ENCODE measurements at regions of chr12 and their contacts with region 1.

Region 1: GRCh38 chr12:27434673-27435565 is 11.6 kb upstream of the SMCO2 start:
- DNase-seq: no peak
- H3K4me3 Mint-ChIP-seq: no peak overlapping the region
- H3K27ac Mint-ChIP-seq: no peak overlapping the region
- H3K4me1 Mint-ChIP-seq: peaks cover 55% of the 10 kb centered on the region
- H3K27me3 Mint-ChIP-seq: peaks cover 2% of the 10 kb centered on the region

Region 2: GRCh38 chr12:26939192-26939832 is 495.6 kb before region 1 on chr12:
- intact Hi-C with region 1: no loop called
- DNase-seq: no peak
- H3K4me3 Mint-ChIP-seq: peak overlapping the region; percentile 94
- H3K27ac Mint-ChIP-seq: peak overlapping the region; percentile 91
- H3K4me1 Mint-ChIP-seq: peaks cover 64% of the 10 kb centered on the region
- H3K27me3 Mint-ChIP-seq: no peaks in the 10 kb centered on the region

Region 3: GRCh38 chr12:27412047-27412446 is 22.9 kb before region 1 on chr12:
- intact Hi-C with region 1: no loop called
- DNase-seq: no peak
- H3K4me3 Mint-ChIP-seq: no peak overlapping the region
- H3K27ac Mint-ChIP-seq: no peak overlapping the region
- H3K4me1 Mint-ChIP-seq: no peaks in the 10 kb centered on the region
- H3K27me3 Mint-ChIP-seq: no peaks in the 10 kb centered on the region

Region 4: DNA sequence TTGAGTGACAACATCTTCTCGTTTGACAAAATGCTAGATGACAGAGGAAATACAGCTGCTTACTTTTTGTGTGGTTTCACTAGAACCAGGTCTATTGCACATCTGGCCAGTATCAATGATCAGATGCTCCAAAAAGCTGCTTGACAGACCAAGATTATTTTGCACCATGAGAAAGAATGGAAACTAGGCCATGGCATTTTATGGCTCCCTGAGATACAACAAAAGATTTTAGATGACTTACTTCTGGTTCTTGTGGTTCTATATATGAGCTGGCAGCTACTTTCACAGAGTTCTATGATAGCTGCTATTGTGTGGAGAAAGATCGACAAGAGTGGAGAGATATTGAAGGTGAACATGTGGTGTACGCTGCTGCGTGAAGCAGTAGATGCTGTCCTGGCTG is 63.2 kb after region 1 on chr12:
- intact Hi-C with region 1: loop called (anchors 1 kb)
- DNase-seq: peak; percentile 21
- H3K4me3 Mint-ChIP-seq: peak overlapping the region; percentile 15
- H3K27ac Mint-ChIP-seq: peak overlapping the region; percentile 90
- H3K4me1 Mint-ChIP-seq: peaks cover 60% of the 10 kb centered on the region
- H3K27me3 Mint-ChIP-seq: peaks cover 10% of the 10 kb centered on the region

Region 5: DNA sequence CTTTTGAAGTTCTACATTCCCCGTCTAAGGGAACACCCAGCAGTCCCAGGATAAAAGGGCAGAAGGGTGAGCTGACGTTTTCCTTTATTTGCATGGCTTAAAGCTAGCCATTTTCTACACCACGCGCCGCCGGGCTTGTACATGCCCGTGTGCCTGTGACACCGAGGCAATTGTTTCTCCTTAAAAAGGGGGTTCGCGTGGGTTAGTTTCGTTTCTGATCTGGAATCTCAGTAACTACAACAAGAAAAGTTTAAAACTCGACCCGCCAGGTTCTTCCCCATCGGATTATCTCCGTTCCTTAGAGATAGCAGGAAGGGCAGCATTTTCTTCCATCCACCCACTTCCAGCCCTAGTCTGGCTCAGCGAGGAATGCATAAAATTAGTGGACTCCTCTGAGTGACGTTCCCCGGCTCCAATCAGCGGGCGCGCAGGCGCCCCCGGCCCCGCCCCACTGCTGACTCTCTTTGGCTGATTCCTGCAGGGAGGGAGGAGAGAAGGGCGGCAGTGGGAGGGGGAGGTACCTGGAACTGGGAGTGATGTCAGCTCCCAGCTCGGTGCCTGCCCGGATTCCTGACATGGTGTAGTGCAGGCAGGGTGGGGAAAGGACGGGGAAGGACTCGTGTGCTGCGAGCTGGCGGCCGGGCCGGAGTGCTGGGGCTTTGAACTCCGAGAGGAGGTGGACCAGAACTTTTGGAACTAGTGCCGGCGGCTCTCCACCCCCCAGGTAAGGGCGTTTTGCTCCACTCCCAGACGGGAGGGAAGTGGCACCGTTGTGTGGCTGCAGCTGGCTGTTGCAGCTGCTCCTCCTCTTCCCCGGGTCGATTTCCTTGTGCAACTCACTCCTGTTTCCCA is 88.9 kb after region 1 on chr12 and contains the start of gene PPFIBP1:
- intact Hi-C with region 1: loop called (anchors 5 kb)
- DNase-seq: peak; percentile 80
- H3K4me3 Mint-ChIP-seq: peak within 1 kb of the TSS; percentile 83
- H3K27ac Mint-ChIP-seq: peak within 1 kb of the TSS; percentile 89
- H3K4me1 Mint-ChIP-seq: peaks cover 20% of the 10 kb centered on the region
- H3K27me3 Mint-ChIP-seq: peaks cover 55% of the 10 kb centered on the region
- total RNA-seq, gene PPFIBP1: 73.3 and 74.1 TPM in 2 replicates

Region 6: DNA sequence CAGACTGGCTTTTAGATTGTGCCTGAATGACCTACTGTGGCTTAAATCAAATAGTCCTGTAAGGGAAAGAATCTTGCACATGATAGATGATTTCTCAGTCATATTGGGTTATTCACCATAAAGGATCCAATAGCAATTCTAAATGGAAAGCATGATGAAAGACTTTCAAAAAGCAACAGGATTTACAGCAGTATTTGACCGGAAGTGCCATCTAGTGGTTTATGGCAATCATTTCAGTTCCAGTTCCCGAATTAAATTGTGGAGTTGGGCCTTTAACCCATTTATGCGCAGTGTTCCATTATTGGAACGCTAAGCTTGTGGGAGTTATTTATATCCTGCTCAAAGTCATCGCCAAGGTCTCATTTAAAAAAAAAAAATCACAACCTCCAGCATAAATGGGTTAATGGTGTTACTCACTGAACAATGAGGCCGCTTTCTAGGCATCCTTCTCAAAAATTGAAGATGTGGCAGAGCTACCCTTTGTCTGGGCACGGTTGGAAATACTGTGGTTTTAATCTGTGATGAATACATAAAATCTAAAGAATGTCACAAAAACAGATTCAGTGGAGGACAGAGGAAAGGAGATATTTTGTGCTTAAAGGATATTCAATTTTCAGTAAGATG is 200.5 kb after region 1 on chr12:
- intact Hi-C with region 1: loop called (anchors 2 kb)
- DNase-seq: no peak
- H3K4me3 Mint-ChIP-seq: no peak overlapping the region
- H3K27ac Mint-ChIP-seq: no peak overlapping the region
- H3K4me1 Mint-ChIP-seq: peaks cover 14% of the 10 kb centered on the region
- H3K27me3 Mint-ChIP-seq: peaks cover 6% of the 10 kb centered on the region

Region 7: DNA sequence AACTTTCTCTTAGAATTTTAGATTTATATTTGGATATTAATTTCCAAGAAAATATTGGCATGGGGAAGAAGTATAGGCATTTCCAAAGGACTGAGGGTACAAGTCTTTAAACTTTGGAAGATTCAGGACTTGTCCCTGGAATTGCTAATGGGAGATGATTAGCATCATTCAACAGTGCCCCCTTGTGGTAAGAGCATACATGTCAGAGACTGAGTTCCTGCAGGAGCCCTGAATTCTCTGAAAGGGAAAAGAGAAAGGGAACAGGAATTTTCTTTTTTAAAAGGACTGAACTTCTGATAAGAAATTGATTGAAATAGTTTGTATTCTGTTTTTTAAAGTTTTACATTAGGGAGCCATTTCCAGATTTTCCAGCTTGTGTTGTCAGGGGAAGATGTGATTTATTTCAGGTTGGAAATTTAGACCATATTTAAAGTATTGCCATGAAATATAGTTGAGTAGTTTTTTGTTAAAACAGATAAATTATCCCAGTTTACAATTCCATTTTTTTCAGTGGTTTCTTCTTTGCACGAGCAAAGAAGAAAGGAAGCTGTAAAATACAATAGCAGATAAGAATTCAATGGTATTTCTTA is 217.3 kb after region 1 on chr12:
- intact Hi-C with region 1: loop called (anchors 2 kb)
- DNase-seq: no peak
- H3K4me3 Mint-ChIP-seq: no peak overlapping the region
- H3K27ac Mint-ChIP-seq: no peak overlapping the region
- H3K4me1 Mint-ChIP-seq: peaks cover 16% of the 10 kb centered on the region
- H3K27me3 Mint-ChIP-seq: no peaks in the 10 kb centered on the region